ENCODE measurements at regions of chr17 and their contacts with region 1.

Region 1: DNA sequence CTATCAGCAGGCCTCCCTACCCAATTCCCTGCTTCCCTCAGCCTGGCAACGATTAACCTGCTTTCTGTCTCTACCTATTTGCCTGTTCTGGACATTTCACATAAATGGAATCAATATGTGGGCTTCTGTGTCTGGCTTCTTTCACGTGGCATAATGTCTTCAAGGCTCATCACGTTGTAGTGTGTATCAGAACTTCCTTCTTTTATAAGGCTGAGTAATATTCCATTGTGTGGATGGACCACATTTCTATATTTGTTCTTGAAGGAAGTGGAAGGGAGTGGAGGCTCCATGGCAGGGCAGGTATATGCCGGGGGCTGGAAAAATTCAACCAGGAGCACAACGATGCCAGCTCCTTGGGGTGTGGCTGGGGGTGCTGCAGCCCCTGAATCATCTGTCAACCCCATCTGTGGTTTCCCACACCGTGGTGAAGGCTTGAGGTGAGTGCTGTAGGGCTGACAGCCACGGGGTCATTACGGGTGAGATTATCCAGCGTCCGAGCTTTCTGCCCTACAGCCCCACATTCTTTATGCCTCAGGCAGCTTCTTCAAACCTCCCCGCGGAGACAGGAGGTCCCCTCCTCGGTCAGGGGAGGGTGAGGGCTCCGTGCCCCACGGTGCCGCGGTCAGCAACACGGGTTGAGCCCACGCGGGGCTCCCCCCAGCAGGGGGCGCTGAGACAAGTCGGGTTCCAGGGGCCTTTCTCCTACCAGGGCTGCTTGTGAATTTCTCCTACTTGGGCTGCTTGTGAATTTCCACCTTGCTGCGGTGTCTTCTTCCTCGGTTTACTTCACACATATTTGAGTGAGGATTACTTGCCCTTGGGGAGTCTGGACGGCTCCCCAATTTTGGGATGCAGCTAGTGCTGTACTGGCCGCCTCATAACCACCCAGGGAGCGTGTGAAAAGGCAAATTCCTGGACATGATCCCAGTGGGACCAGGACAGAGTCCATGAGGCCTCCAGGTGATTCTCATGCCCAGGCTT is 18.3 kb upstream of the WFIKKN2 start:
- DNase-seq: no peak
- H3K4me3 ChIP-seq: no peak overlapping the region
- H3K27ac ChIP-seq: no peak overlapping the region
- H3K4me1 ChIP-seq: no peaks in the 10 kb centered on the region
- H3K27me3 ChIP-seq: peaks cover 0 to 5% of the 10 kb centered on the region in 2 experiments
- CTCF ChIP-seq: peak; percentile 84 to 93
- POLR2A ChIP-seq: no peak

Region 2: DNA sequence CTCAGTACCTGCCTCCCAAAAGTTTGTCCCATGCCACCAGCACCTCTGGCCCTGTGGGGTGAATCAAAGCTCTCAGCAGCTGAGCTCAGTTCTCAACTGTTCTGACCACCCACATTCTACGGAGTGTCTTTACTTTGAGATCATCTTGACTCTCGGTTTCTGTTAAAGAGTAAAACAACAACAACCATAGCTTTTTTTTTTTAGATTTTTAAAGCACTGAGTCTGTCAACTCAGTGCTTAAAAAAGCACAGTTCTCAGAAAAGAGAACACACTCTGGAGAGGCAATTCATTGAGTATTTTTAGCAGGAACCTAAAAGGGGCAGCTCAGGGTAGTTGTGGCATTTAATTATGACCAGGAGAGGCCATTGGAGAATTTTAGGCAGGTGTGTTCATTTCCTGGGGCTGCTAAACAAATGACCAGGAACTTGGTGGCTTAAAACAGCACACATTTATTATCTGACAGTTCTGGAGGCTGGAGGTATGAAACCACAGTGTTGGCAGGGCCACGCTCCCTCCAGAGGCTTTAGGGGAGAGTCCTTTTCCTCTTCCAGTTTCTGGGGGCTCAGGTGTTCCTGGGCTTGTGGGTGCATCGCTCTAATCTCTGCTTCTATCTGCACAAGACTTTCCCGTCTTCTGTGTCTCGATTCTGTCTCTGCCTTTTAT is 11.6 kb after region 1 on chr17:
- CTCF ChIA-PET with region 1: interaction called, 10 read pairs
- POLR2A ChIA-PET with region 1: no interaction called
- dilution Hi-C with region 1: no loop called
- intact Hi-C with region 1: no loop called
- DNase-seq: no peak
- H3K4me3 ChIP-seq: no peak overlapping the region
- H3K27ac ChIP-seq: no peak overlapping the region
- H3K4me1 ChIP-seq: no peaks in the 10 kb centered on the region
- H3K27me3 ChIP-seq: peaks cover 2 to 3% of the 10 kb centered on the region in 2 experiments
- CTCF ChIP-seq: no peak
- POLR2A ChIP-seq: no peak

Region 3: GRCh38 chr17:50841949-50842354 is 24.9 kb after region 1 on chr17:
- CTCF ChIA-PET with region 1: interaction called, 6 read pairs
- POLR2A ChIA-PET with region 1: no interaction called
- dilution Hi-C with region 1: no loop called
- intact Hi-C with region 1: loop called (anchors 1 kb)
- DNase-seq: peak; percentile 58
- H3K4me3 ChIP-seq: no peak overlapping the region
- H3K27ac ChIP-seq: no peak overlapping the region
- H3K4me1 ChIP-seq: no peaks in the 10 kb centered on the region
- H3K27me3 ChIP-seq: no peaks in the 10 kb centered on the region
- CTCF ChIP-seq: peak; percentile 79 to 90
- POLR2A ChIP-seq: no peak

Region 4: GRCh38 chr17:50949989-50950881 is 133.2 kb after region 1 on chr17:
- CTCF ChIA-PET with region 1: interaction called, 3 read pairs
- POLR2A ChIA-PET with region 1: no interaction called
- dilution Hi-C with region 1: no loop called
- intact Hi-C with region 1: loop called (anchors 1 kb)
- DNase-seq: peak; percentile 58
- H3K4me3 ChIP-seq: no peak overlapping the region
- H3K27ac ChIP-seq: no peak overlapping the region
- H3K4me1 ChIP-seq: peaks cover 7% of the 10 kb centered on the region
- H3K27me3 ChIP-seq: no peaks in the 10 kb centered on the region
- CTCF ChIP-seq: peak; percentile 61 to 78
- POLR2A ChIP-seq: no peak